Dendritic cell treated with granulocyte-macrophage colony-stimulating factor and Interleukin-4, amounts not matched to agents 40 ng/mL and 50 ng/mL, for 4 days (primary cell): ENCODE measurements at regions of chr6 and their contacts with region 1.

Region 1: GRCh38 chr6:138654715-138655634 is 118.6 kb upstream of the CCDC28A start:
- H3K4me3 Mint-ChIP-seq: no peak overlapping the region
- H3K27ac Mint-ChIP-seq: peak overlapping the region; percentile 17
- H3K4me1 Mint-ChIP-seq: peaks cover 33% of the 10 kb centered on the region
- H3K27me3 Mint-ChIP-seq: no peaks in the 10 kb centered on the region

Region 2: GRCh38 chr6:138600726-138601125 is 54.2 kb before region 1 on chr6:
- intact Hi-C with region 1: loop called (anchors 10 kb)
- H3K4me3 Mint-ChIP-seq: no peak overlapping the region
- H3K27ac Mint-ChIP-seq: no peak overlapping the region
- H3K4me1 Mint-ChIP-seq: peaks cover 4% of the 10 kb centered on the region
- H3K27me3 Mint-ChIP-seq: peaks cover 3% of the 10 kb centered on the region